IMR-90 (cell line): ENCODE measurements at regions of chr7 and their contacts with region 1.

Region 1: DNA sequence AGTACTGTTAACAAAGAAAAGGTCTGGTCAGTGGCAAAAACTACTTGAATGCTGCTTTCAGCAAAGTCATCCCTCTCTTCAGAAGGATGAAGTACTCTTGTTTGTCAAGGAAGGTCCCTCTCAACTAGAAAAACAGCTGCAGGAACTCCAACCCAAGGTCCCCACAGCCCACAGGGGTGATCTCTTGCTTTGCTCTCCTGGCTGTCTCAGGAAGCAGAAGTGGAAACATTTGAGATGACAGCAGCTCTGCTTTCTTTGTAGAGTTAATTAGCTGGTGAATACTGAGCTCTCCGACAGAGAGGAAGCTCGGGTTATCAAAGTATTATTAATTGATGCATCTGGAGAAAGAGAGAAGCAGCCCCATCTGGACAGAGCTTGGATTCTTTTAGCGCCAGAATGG is 25.4 kb upstream of the LRGUK start:
- DNase-seq: no peak
- ATAC-seq: no peak
- H3K4me3 ChIP-seq: no peak overlapping the region
- H3K27ac ChIP-seq: no peak overlapping the region
- H3K4me1 ChIP-seq: no peaks in the 10 kb centered on the region
- H3K27me3 ChIP-seq: no peaks in the 10 kb centered on the region
- CTCF ChIP-seq: no peak
- POLR2A ChIP-seq: no peak
- RAD21 ChIP-seq: no peak

Region 2: DNA sequence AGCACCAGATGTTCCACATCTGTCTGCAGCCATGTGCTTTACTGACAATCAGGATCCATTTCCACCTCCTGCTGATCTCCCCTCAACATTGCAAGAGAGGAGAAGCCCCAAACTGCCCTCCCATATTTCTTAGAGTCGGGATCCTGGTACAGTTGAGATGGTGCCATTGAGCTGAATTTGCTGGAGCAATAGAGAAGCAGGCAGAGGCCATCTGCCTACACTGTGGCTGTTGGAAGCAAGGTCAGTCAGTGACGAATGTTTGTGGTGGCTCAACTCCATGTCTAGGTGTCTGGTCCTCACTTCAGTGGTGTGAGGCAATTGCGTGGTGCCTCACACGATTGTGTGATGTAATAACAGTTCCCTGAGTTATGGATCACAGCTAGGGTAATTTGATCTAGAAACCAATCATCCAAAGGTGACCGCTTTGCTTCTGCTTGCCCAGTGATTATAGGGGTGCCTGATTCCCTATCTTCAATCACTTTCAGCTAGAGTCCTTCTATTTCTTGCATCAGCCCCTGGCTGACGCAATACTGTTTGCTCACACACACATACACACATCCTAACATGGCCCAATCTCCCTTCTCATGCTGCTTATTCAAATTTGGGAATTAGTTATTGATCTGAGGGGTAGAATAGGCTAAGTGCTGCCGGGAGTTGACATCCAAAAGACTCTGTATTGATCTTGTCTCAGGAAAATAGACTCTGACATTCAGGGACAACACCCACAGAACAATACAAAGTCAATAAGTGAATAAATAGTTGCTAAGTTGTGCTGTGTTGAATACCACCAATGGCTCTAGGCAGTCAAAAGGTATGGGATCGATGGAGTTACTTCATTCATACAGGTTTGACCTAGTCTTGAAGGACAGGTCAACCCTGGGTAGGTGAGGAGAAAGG is 261.1 kb after region 1 on chr7:
- CTCF ChIA-PET with region 1: no interaction called
- POLR2A ChIA-PET with region 1: interaction called, 17 read pairs
- dilution Hi-C with region 1: no loop called
- in situ Hi-C with region 1: no loop called
- intact Hi-C with region 1: no loop called
- DNase-seq: peak; percentile 18
- ATAC-seq: no peak
- H3K4me3 ChIP-seq: no peak overlapping the region
- H3K27ac ChIP-seq: no peak overlapping the region
- H3K4me1 ChIP-seq: peaks cover 8% of the 10 kb centered on the region
- H3K27me3 ChIP-seq: no peaks in the 10 kb centered on the region; the same call in 1 of the 2 replicates
- CTCF ChIP-seq: no peak
- POLR2A ChIP-seq: no peak
- RAD21 ChIP-seq: no peak